PC-9 (cell line): ENCODE measurements at regions of chr12 and their contacts with region 1.

Region 1: GRCh38 chr12:97321621-97322020 is 141.0 kb upstream of the RMST start:
- DNase-seq: no peak
- H3K4me3 ChIP-seq: no peak overlapping the region
- H3K27ac ChIP-seq: no peak overlapping the region
- H3K4me1 ChIP-seq: no peaks in the 10 kb centered on the region
- H3K27me3 ChIP-seq: peaks cover 49% of the 10 kb centered on the region
- CTCF ChIP-seq: no peak

Region 2: GRCh38 chr12:97185567-97185966 is 136.1 kb before region 1 on chr12:
- CTCF ChIA-PET with region 1: interaction called, 12 read pairs
- POLR2A ChIA-PET with region 1: no interaction called
- intact Hi-C with region 1: no loop called
- DNase-seq: no peak
- H3K4me3 ChIP-seq: no peak overlapping the region
- H3K27ac ChIP-seq: no peak overlapping the region
- H3K4me1 ChIP-seq: no peaks in the 10 kb centered on the region
- H3K27me3 ChIP-seq: no peaks in the 10 kb centered on the region
- CTCF ChIP-seq: no peak

Region 3: DNA sequence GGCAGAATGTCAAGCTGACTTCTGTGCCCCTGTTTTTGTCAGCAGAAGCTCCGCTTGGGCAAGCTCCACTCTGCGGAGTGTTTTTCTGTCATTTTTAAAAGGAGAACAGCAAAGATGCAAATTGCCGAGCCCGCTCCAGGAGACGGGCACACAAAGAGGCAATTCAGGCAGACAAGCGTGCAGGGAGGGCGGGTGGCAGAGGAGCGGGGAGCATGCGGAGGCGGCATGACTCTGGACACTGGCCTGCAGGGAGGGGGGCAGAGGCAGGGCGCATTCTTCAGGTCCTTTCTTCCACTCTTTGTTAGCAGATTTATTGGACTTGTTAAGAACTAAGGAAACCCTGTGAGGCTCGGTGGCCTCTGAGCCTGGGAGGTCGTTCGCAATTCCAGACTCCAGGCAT is 46.4 kb before region 1 on chr12:
- CTCF ChIA-PET with region 1: no interaction called
- POLR2A ChIA-PET with region 1: no interaction called
- intact Hi-C with region 1: no loop called
- DNase-seq: no peak
- H3K4me3 ChIP-seq: no peak overlapping the region
- H3K27ac ChIP-seq: no peak overlapping the region
- H3K4me1 ChIP-seq: no peaks in the 10 kb centered on the region
- H3K27me3 ChIP-seq: peaks cover 16% of the 10 kb centered on the region
- CTCF ChIP-seq: no peak

Region 4: DNA sequence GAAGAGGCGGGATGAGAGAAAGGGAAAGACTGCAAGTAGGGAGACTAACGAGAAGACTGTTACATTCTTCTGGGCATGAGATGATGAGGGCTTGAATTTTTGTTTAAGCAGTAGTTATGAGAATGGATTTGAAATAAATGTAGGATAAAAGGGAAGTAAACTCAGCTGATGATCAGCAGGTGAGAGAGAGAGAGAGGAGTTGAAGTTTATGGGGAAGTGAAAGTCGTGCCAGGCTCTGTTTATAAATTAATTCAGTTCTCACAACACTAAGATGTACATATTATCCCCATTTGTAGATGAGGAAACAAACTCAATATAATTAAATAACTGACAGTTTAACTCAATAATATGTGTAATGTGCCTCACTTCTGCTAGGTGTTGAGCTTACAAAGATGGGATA is 29.0 kb before region 1 on chr12:
- CTCF ChIA-PET with region 1: no interaction called
- POLR2A ChIA-PET with region 1: no interaction called
- intact Hi-C with region 1: no loop called
- DNase-seq: no peak
- H3K4me3 ChIP-seq: no peak overlapping the region
- H3K27ac ChIP-seq: no peak overlapping the region
- H3K4me1 ChIP-seq: no peaks in the 10 kb centered on the region
- H3K27me3 ChIP-seq: no peaks in the 10 kb centered on the region
- CTCF ChIP-seq: no peak

Region 5: DNA sequence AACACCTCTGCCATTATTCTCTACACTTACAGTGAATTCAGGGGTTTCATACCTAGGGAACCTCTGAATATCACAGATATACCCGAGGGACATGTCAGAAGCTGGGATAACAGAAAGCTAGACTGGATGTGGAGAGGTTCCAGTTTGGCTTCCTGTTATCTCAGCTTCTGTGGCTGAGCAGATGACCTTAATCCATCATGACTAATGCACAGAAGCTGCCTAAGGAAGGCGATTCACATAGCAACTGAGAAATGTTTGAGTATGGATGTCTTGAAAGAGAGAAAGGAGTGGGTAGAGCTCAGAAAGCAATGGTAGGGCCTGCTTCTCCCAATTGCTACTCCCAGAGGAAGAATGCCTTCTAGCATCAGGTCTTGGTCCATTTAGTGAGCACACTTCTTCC is 328.6 kb after region 1 on chr12:
- CTCF ChIA-PET with region 1: no interaction called
- POLR2A ChIA-PET with region 1: no interaction called
- intact Hi-C with region 1: no loop called
- DNase-seq: no peak
- H3K4me3 ChIP-seq: no peak overlapping the region
- H3K27ac ChIP-seq: no peak overlapping the region
- H3K4me1 ChIP-seq: no peaks in the 10 kb centered on the region
- H3K27me3 ChIP-seq: no peaks in the 10 kb centered on the region
- CTCF ChIP-seq: no peak